Mammary epithelial cell (primary cell): ENCODE measurements at regions of chr20 and their contacts with region 1.

Region 1: GRCh38 chr20:50762435-50763201 is 31.2 kb downstream of the PARD6B start:
- DNase-seq: peak; percentile 82
- H3K4me3 ChIP-seq: peak overlapping the region in 2 of 3 experiments; percentile 0 to 28
- H3K27ac ChIP-seq: peak overlapping the region; percentile 90
- H3K4me1 ChIP-seq: peaks cover 37% of the 10 kb centered on the region
- H3K27me3 ChIP-seq: no peaks in the 10 kb centered on the region
- CTCF ChIP-seq: no peak

Region 2: DNA sequence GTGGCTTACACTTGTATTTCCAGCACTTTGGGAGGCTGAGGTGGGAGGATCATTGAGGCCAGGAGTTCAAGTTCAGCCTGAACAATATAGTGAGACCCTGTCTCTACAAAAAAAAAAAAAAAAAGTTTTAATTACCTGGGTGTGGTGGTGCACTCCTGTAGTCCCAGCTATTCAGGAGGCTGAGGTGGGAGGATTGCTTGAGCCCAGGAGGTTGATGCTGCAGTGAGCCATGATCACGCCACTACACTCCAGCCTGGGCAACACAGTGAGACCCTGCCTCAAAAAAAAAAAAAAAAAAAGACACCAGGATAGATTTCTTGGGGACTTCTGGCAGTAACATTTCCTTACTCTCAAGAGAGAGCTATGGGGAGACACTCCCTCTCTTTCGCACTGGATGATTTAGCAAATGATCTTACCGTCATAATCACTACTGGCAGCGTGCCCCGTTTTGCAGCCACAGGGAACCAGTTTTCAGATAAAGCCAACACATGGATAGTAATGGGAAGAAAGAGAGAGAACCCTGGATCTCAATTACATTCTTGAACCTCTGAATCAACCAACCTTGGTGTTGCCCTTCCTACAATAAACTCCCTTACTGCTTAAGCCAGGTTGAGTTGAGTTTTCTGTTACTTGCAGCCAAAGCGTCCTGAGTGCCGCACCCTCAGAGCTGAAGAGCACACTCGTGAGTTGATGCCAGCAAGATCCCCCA is 270.5 kb before region 1 on chr20:
- CTCF ChIA-PET with region 1: no interaction called
- dilution Hi-C with region 1: no loop called
- in situ Hi-C with region 1: no loop called
- intact Hi-C with region 1: loop called (anchors 5 kb)
- DNase-seq: peak; percentile 42
- H3K4me3 ChIP-seq: no peak overlapping the region
- H3K27ac ChIP-seq: peak overlapping the region; percentile 4
- H3K4me1 ChIP-seq: peaks cover 38% of the 10 kb centered on the region
- H3K27me3 ChIP-seq: no peaks in the 10 kb centered on the region
- CTCF ChIP-seq: no peak

Region 3: DNA sequence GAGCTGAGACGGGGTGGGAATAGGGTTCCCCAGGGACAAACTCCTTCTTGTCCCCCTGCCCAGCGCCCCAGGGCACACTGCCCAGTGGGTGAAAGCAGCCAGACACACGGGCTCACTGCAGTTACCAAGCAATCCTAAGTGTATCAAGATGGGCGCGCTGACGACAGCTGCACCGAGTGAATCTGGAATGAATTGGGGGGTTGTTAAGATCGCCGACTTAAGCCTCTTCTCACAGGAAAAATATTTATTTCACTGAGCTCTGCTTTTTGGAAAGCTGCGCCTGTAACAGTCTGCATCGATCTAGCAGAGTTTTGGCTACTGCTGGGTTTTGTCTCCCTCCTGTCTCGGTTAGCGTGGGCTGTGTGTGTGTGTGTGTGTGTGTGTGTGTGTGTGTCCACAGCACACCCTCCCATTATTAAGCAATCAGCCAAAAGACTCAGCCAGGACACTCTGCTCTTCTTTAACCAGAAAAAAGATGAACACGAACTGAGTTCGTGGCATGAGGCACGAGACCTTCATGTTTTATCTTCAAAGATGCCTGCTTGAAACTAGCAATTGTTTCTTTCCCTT is 107.2 kb before region 1 on chr20:
- CTCF ChIA-PET with region 1: no interaction called
- dilution Hi-C with region 1: no loop called
- in situ Hi-C with region 1: no loop called
- intact Hi-C with region 1: no loop called
- DNase-seq: no peak
- H3K4me3 ChIP-seq: no peak overlapping the region
- H3K27ac ChIP-seq: no peak overlapping the region
- H3K4me1 ChIP-seq: peaks cover 4% of the 10 kb centered on the region
- H3K27me3 ChIP-seq: no peaks in the 10 kb centered on the region
- CTCF ChIP-seq: no peak

Region 4: GRCh38 chr20:50724851-50725721 is 37.5 kb before region 1 on chr20:
- CTCF ChIA-PET with region 1: no interaction called
- dilution Hi-C with region 1: no loop called
- in situ Hi-C with region 1: no loop called
- intact Hi-C with region 1: loop called (anchors 5 kb)
- DNase-seq: peak; percentile 98
- H3K4me3 ChIP-seq: no peak overlapping the region
- H3K27ac ChIP-seq: peak overlapping the region; percentile 70
- H3K4me1 ChIP-seq: peaks cover 48% of the 10 kb centered on the region
- H3K27me3 ChIP-seq: no peaks in the 10 kb centered on the region
- CTCF ChIP-seq: no peak